ENCODE measurements at regions of chrX and their contacts with region 1.

Region 1: DNA sequence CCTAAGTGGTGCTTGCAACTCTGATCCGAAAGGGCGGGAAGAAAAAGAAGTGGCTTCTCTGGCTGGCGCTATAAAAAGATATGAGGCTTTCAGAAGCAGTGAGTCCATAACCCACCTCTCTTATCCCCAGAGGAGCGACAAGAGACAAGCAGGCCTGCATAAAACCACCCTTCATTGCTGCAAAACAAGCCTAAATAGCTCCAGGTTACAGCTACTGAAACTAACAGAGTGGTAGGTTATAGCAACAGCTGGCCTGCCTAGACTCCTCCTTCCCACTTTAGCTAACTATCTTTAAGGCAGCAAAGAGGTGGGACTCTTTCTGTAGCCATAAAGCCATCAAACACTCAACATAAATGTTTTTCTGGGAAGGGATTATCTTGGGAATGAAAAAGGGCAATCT is 245.0 kb upstream of the GPR101 start:
- DNase-seq: no peak

Region 2: GRCh38 chrX:136967966-136968365 is 310.9 kb before region 1 on chrX:
- intact Hi-C with region 1: loop called in 1 of 2 experiments (anchors 5 kb)
- DNase-seq: no peak

Region 3: DNA sequence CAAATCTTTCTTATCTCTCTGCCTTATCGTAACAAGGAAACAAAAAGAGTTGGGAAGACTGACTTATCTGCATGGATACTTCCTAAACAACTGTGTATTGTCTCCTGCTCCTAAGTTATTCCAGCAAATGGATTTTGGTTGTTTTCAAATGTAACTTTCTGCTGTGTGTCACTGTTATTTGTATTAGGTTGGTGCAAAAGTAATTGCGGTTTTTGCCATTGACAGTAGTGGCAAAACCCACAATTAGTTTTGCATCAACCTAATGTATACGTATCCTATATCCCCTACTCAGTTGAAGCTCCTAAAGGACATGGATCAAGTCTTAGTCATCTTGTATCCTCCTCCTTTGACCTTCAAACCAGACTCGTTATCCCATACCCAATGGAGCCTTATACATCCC is 18.3 kb after region 1 on chrX:
- intact Hi-C with region 1: loop called in 1 of 2 experiments (anchors 1 kb)
- DNase-seq: no peak

Measured in posterior vena cava (tissue), 2 donors.